Posterior vena cava (tissue), 2 donors: ENCODE measurements at regions of chr17 and their contacts with region 1.

Region 1: DNA sequence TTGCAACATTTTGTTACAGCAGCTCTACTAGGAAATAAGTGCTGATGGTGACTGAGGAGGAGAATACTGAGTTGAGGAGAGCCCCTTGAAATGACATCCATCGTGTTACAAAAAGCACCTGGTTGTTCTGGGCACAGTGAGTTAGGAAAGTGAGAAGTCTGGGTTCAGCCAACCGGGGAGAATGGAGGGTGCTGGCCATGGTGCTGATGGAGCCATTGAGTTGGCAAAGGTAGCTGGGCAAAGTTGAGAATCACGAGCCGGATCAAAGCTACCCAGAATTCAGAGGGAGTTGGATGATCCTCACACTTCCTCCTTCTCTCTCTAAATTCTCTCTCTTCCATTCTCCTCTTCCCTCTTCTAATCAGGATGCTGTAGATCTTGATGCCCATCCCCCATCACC is 35.0 kb upstream of the ASIC2 start:
- DNase-seq: no peak

Region 2: GRCh38 chr17:33375103-33375813 is 47.1 kb after region 1 on chr17:
- intact Hi-C with region 1: loop called in 1 of 2 experiments (anchors 2 kb)
- DNase-seq: no peak

Region 3: DNA sequence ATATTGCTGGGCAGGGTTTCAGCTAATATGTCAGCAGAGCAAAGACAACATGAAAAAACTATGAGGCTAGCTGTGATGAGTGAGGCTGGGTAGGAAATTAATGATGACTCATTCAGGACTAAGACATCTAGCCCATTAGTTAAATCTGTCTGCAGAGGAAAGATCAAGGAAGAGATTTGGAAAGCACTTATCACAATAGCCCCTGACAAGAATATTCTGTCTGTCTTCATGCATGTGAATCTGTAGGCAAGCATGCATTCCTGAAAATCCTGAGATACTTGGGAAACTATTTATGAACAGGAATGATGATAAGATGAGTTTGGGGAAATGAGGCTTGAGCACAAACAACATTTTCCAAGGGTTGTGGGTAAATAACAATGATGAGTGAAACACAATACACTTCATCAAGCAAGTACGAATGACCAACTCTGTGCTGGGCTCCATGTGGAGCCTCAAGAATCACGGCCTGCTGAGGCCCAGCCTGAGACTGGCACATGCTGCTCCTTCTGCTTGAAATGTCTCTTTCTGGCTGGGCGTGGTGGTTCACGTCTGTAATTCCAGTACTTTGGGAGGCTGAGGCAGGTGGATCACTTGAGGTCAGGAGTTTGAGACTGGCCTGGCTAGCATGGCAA is 61.5 kb after region 1 on chr17:
- intact Hi-C with region 1: no loop called
- DNase-seq: no peak

Region 4: GRCh38 chr17:35127751-35128514 is 1799.8 kb after region 1 on chr17:
- intact Hi-C with region 1: no loop called
- DNase-seq: peak; percentile 81